CD4-positive, alpha-beta T cell (primary cell): ENCODE measurements at regions of chr6 and their contacts with region 1.

Region 1: GRCh38 chr6:32666420-32667300 is at the start of gene HLA-DQB1:
- DNase-seq: peak in 12 of 14 experiments; percentile 1 to 90 (median 39)
- ATAC-seq: peak; percentile 81
- H3K4me3 ChIP-seq: peak within 1 kb of the TSS; percentile 47
- H3K4me3 Mint-ChIP-seq: peak within 1 kb of the TSS; percentile 83
- H3K27ac ChIP-seq: no peak within 1 kb of the TSS
- H3K27ac Mint-ChIP-seq: peak within 1 kb of the TSS; percentile 72
- H3K4me1 ChIP-seq: peaks cover 4% of the 10 kb centered on the region
- H3K4me1 Mint-ChIP-seq: peaks cover 46% of the 10 kb centered on the region
- H3K27me3 ChIP-seq: no peaks in the 10 kb centered on the region
- H3K27me3 Mint-ChIP-seq: peaks cover 8% of the 10 kb centered on the region
- CTCF ChIP-seq: no peak
- total RNA-seq, gene HLA-DQB1: 21.5 to 21.7 TPM

Region 2: GRCh38 chr6:31419842-31420241 is 1246.8 kb before region 1 on chr6:
- CTCF ChIA-PET with region 1: no interaction called
- POLR2A ChIA-PET with region 1: no interaction called
- intact Hi-C with region 1: loop called in 1 of 2 experiments (anchors 5 kb)
- DNase-seq: no peak
- ATAC-seq: no peak
- H3K4me3 ChIP-seq: no peak overlapping the region
- H3K4me3 Mint-ChIP-seq: no peak overlapping the region
- H3K27ac ChIP-seq: no peak overlapping the region
- H3K27ac Mint-ChIP-seq: no peak overlapping the region
- H3K4me1 ChIP-seq: no peaks in the 10 kb centered on the region
- H3K4me1 Mint-ChIP-seq: peaks cover 14% of the 10 kb centered on the region
- H3K27me3 ChIP-seq: no peaks in the 10 kb centered on the region
- H3K27me3 Mint-ChIP-seq: no peaks in the 10 kb centered on the region
- CTCF ChIP-seq: no peak

Region 3: GRCh38 chr6:32622545-32623401 is 43.9 kb before region 1 on chr6:
- CTCF ChIA-PET with region 1: interaction called, 4 read pairs
- POLR2A ChIA-PET with region 1: interaction called, 10 read pairs
- intact Hi-C with region 1: loop called (anchors 2 kb)
- DNase-seq: peak in 11 of 14 experiments; percentile 8 to 94 (median 24)
- ATAC-seq: peak; percentile 77
- H3K4me3 ChIP-seq: no peak overlapping the region
- H3K4me3 Mint-ChIP-seq: peak overlapping the region; percentile 13
- H3K27ac ChIP-seq: peak overlapping the region; percentile 49 to 73
- H3K27ac Mint-ChIP-seq: peak overlapping the region; percentile 91
- H3K4me1 ChIP-seq: peaks cover 23% of the 10 kb centered on the region
- H3K4me1 Mint-ChIP-seq: peaks cover 57% of the 10 kb centered on the region
- H3K27me3 ChIP-seq: no peaks in the 10 kb centered on the region
- H3K27me3 Mint-ChIP-seq: no peaks in the 10 kb centered on the region
- CTCF ChIP-seq: peak; percentile 45

Region 4: GRCh38 chr6:32685603-32686002 is 18.9 kb after region 1 on chr6:
- CTCF ChIA-PET with region 1: no interaction called
- POLR2A ChIA-PET with region 1: interaction called, 4 read pairs
- intact Hi-C with region 1: loop called in 1 of 2 experiments (anchors 2 kb)
- DNase-seq: peak in 7 of 14 experiments; percentile 2 to 93 (median 40)
- ATAC-seq: peak; percentile 97
- H3K4me3 ChIP-seq: no peak overlapping the region
- H3K4me3 Mint-ChIP-seq: peak overlapping the region; percentile 14
- H3K27ac ChIP-seq: no peak overlapping the region
- H3K27ac Mint-ChIP-seq: peak overlapping the region; percentile 38
- H3K4me1 ChIP-seq: no peaks in the 10 kb centered on the region
- H3K4me1 Mint-ChIP-seq: peaks cover 45% of the 10 kb centered on the region
- H3K27me3 ChIP-seq: no peaks in the 10 kb centered on the region
- H3K27me3 Mint-ChIP-seq: no peaks in the 10 kb centered on the region
- CTCF ChIP-seq: no peak

Region 5: GRCh38 chr6:32700391-32701040 is 33.9 kb after region 1 on chr6:
- CTCF ChIA-PET with region 1: no interaction called
- POLR2A ChIA-PET with region 1: no interaction called
- intact Hi-C with region 1: no loop called
- DNase-seq: peak in 10 of 14 experiments; percentile 0 to 73 (median 10)
- ATAC-seq: peak; percentile 41
- H3K4me3 ChIP-seq: no peak overlapping the region
- H3K4me3 Mint-ChIP-seq: no peak overlapping the region
- H3K27ac ChIP-seq: no peak overlapping the region
- H3K27ac Mint-ChIP-seq: no peak overlapping the region
- H3K4me1 ChIP-seq: peaks cover 3% of the 10 kb centered on the region
- H3K4me1 Mint-ChIP-seq: no peaks in the 10 kb centered on the region
- H3K27me3 ChIP-seq: peaks cover 4 to 12% of the 10 kb centered on the region in 2 experiments
- H3K27me3 Mint-ChIP-seq: peaks cover 50% of the 10 kb centered on the region
- CTCF ChIP-seq: peak; percentile 93

Region 6: GRCh38 chr6:32763427-32763826 is 96.8 kb after region 1 on chr6 and contains the start of gene HLA-DQB2:
- CTCF ChIA-PET with region 1: no interaction called
- POLR2A ChIA-PET with region 1: interaction called, 4 read pairs
- intact Hi-C with region 1: loop called in 1 of 2 experiments (anchors 1 kb)
- DNase-seq: peak in 2 of 14 experiments; percentile 30 to 37
- ATAC-seq: no peak
- H3K4me3 ChIP-seq: no peak within 1 kb of the TSS
- H3K4me3 Mint-ChIP-seq: no peak within 1 kb of the TSS
- H3K27ac ChIP-seq: no peak within 1 kb of the TSS
- H3K27ac Mint-ChIP-seq: no peak within 1 kb of the TSS
- H3K4me1 ChIP-seq: no peaks in the 10 kb centered on the region
- H3K4me1 Mint-ChIP-seq: peaks cover 4% of the 10 kb centered on the region
- H3K27me3 ChIP-seq: peaks cover 18 to 33% of the 10 kb centered on the region in 2 experiments
- H3K27me3 Mint-ChIP-seq: peaks cover 58% of the 10 kb centered on the region
- CTCF ChIP-seq: no peak
- total RNA-seq, gene HLA-DQB2: 1.3 to 2.2 TPM

Region 7: DNA sequence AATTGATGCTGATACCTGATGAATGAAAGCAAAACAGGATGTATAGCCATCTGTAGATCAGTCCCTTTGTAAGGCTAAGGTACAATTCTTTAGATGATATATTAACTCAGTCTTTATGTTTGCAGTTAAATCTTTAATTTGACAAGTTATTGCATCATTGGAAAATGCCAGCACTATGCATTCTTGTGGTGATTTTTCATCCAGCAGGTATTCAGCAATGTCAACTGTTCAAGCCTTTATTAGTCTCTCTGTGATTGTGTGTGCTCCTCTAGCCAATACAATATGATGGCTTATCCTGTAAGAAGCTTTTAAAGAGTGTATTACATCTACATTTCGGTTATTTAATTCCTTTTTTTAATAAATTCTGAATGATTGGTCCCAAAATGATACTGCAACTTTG is 239.9 kb after region 1 on chr6:
- CTCF ChIA-PET with region 1: no interaction called
- POLR2A ChIA-PET with region 1: no interaction called
- intact Hi-C with region 1: no loop called
- DNase-seq: no peak
- ATAC-seq: no peak
- H3K4me3 ChIP-seq: no peak overlapping the region
- H3K4me3 Mint-ChIP-seq: no peak overlapping the region
- H3K27ac ChIP-seq: no peak overlapping the region
- H3K27ac Mint-ChIP-seq: no peak overlapping the region
- H3K4me1 ChIP-seq: no peaks in the 10 kb centered on the region
- H3K4me1 Mint-ChIP-seq: no peaks in the 10 kb centered on the region
- H3K27me3 ChIP-seq: no peaks in the 10 kb centered on the region
- H3K27me3 Mint-ChIP-seq: peaks cover 10% of the 10 kb centered on the region
- CTCF ChIP-seq: no peak